CD8-positive, alpha-beta memory T cell (primary cell): ENCODE measurements at regions of chr3 and their contacts with region 1.

Region 1: GRCh38 chr3:196684548-196685407 is 27.3 kb downstream of the CEP19 start:
- DNase-seq: peak; percentile 47 to 70 (median 57)
- H3K4me3 ChIP-seq: peak overlapping the region; percentile 52
- H3K4me3 Mint-ChIP-seq: peak overlapping the region; percentile 8 to 76 (median 66)
- H3K27ac ChIP-seq: no peak overlapping the region
- H3K27ac Mint-ChIP-seq: peak overlapping the region; percentile 5 to 83 (median 50)
- H3K4me1 ChIP-seq: peaks cover 11% of the 10 kb centered on the region
- H3K4me1 Mint-ChIP-seq: peaks cover 10 to 15% (median 12%) of the 10 kb centered on the region in 3 donors
- H3K27me3 ChIP-seq: no peaks in the 10 kb centered on the region
- H3K27me3 Mint-ChIP-seq: no peaks in the 10 kb centered on the region

Region 2: DNA sequence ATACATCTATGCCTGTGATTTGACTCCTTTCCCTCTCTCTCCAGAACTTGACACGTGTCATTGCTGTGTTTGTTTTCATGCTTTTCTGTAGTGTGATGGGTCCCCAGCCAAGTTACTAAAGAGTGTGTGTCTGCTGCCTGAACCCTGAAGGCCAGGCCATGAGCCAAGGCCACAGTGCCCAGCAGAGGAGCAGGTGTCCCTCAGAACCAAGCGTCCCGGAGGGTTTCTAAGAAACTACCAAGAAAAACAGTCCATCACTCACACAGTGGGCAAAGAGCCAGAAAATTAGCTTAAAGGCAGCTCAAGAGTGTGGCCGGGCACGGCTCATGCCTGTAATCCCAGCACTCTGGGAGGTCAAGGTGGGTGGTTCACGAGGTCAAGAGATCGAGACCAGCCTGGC is 81.1 kb before region 1 on chr3:
- CTCF ChIA-PET with region 1: interaction called, 160 read pairs
- POLR2A ChIA-PET with region 1: interaction called, 8 read pairs
- DNase-seq: no peak
- H3K4me3 ChIP-seq: no peak overlapping the region
- H3K4me3 Mint-ChIP-seq: no peak overlapping the region
- H3K27ac ChIP-seq: no peak overlapping the region
- H3K27ac Mint-ChIP-seq: peak overlapping the region in 2 of 8 donors; percentile 12 to 52
- H3K4me1 ChIP-seq: peaks cover 6% of the 10 kb centered on the region
- H3K4me1 Mint-ChIP-seq: peaks cover 4 to 7% (median 6%) of the 10 kb centered on the region in 3 donors
- H3K27me3 ChIP-seq: no peaks in the 10 kb centered on the region
- H3K27me3 Mint-ChIP-seq: peaks cover 2 to 4% of the 10 kb centered on the region in 2 donors

Region 3: DNA sequence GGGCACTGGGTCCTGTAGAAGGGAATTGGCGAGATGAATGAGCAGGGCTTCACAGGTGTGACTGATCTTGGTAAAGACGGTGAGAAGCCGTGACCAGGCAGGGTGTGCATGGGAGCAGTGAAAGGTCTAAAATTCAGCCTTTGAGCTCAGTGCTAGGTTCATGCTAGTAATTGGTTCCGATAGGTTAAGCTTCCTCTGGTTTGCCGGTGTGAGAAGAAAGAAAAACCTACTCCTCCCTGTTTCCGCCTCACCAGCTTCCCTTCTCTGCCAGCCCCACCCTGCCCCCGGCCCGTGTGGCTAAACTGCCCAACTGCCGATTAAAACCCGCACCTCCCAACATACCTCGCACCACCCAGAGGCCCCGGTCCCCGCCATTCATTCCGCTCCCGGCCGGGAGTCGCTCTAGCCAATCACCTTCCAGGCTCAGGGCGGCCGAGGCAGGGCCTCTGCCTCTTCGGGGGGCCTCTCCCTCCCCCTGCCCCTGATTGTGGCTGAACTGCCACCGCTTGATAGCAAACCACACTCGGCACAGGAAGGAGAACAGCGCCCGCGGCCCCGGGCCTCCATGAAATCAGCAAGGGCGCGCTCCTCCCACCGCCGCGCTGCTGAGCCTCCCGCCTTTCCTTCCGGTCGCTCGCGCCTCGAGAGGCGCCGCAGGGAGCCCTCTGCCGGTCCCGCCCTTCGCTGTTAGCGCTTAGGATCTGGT is 52.6 kb before region 1 on chr3:
- CTCF ChIA-PET with region 1: interaction called, 13 read pairs
- POLR2A ChIA-PET with region 1: no interaction called
- DNase-seq: peak; percentile 82 to 94 (median 92)
- H3K4me3 ChIP-seq: peak overlapping the region; percentile 66
- H3K4me3 Mint-ChIP-seq: peak overlapping the region; percentile 81 to 93 (median 84)
- H3K27ac ChIP-seq: peak overlapping the region; percentile 73
- H3K27ac Mint-ChIP-seq: peak overlapping the region; percentile 88 to 96 (median 96)
- H3K4me1 ChIP-seq: peaks cover 36% of the 10 kb centered on the region
- H3K4me1 Mint-ChIP-seq: peaks cover 46 to 60% (median 54%) of the 10 kb centered on the region in 3 donors
- H3K27me3 ChIP-seq: no peaks in the 10 kb centered on the region
- H3K27me3 Mint-ChIP-seq: no peaks in the 10 kb centered on the region

Region 4: DNA sequence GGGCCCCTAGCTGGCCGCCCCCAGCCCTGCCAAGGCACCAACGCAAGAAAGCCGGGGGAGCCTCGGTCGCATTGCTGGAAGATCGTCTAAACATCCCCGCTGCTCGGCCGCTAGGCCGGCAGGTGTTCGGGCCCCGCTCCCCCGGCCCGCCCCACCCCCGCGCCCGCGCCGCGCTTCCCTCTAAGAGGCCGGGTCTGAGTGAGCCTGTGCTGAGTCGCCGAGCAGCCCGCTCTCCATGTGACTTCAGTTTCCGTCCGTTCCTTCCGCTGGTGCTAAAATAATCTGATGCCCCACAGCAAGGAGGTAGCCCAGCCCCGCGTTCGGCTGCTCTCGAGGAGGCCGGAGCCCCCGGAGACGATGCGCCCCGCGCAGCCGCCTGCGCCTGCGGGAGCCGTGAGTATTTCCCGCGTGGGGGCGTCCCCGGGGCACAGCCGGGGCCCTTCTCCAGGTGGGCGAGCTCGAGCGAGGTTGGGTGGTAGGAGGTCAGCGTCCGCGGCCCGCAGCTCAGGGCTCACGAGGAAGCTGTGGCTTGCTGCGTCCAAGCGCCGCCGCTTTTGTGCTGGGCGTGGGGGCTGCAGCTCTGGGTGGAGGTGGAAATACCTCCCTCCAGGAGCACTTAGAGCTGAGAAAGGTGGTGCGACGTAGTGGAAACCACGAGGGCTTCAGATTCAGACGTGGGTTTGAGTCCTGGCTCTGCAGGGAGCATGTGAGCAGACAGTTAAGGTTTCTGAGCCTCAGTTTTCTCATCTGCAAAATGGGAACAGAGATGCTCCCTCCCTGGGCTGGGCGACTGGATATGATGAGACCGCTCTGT is 45.1 kb before region 1 on chr3 and contains the start of gene NRROS:
- CTCF ChIA-PET with region 1: interaction called, 27 read pairs
- POLR2A ChIA-PET with region 1: interaction called, 6 read pairs
- DNase-seq: peak; percentile 38 to 73 (median 50)
- H3K4me3 ChIP-seq: peak within 1 kb of the TSS; percentile 86
- H3K4me3 Mint-ChIP-seq: peak within 1 kb of the TSS; percentile 71 to 98 (median 86)
- H3K27ac ChIP-seq: peak within 1 kb of the TSS; percentile 71
- H3K27ac Mint-ChIP-seq: peak within 1 kb of the TSS; percentile 69 to 97 (median 93)
- H3K4me1 ChIP-seq: peaks cover 51% of the 10 kb centered on the region
- H3K4me1 Mint-ChIP-seq: peaks cover 61 to 79% (median 76%) of the 10 kb centered on the region in 3 donors
- H3K27me3 ChIP-seq: no peaks in the 10 kb centered on the region
- H3K27me3 Mint-ChIP-seq: no peaks in the 10 kb centered on the region
- total RNA-seq, gene NRROS: 15.6 to 17.0 TPM